Astrocyte of the cerebellum (primary cell): ENCODE measurements at regions of chr2 and their contacts with region 1.

Region 1: DNA sequence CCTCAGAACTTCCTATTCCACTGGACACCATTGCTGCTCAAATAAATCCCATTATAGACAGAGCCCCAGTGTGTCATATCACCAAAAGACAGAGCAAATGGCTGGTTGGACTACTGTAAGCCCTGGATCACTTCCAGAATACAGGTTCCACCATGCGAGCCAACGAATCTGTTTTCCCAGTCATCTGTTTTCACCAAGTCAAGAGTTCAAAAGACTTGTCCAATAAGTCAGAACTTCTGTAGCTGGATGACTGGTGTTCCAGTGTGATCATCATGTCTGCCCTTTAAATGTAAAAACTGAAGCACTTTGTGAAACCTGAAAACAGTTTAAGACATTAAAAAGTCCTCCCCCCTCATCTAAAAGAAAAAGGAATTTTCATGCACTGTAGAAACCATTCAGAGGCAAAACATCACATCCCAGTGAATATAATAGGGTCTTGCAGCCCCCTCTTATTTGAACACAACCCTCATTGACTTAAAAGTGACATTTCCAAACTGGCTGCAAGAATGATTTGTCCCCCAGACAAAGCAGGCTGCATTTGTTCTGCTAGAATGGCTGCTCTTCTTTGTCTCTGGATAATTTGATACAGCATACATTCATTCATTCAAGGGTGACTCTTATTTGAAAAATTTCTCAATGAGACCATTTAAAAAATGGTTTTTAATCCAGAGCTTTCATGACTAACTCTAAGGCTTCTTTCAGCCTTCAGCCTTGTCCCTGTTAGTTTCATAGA is 64.6 kb upstream of the TANC1 start:
- DNase-seq: no peak
- H3K4me3 ChIP-seq: no peak overlapping the region
- CTCF ChIP-seq: no peak

Region 2: GRCh38 chr2:158979772-158980171 is 75.9 kb after region 1 on chr2:
- in situ Hi-C with region 1: no loop called
- DNase-seq: no peak
- H3K4me3 ChIP-seq: no peak overlapping the region
- CTCF ChIP-seq: no peak

Region 3: DNA sequence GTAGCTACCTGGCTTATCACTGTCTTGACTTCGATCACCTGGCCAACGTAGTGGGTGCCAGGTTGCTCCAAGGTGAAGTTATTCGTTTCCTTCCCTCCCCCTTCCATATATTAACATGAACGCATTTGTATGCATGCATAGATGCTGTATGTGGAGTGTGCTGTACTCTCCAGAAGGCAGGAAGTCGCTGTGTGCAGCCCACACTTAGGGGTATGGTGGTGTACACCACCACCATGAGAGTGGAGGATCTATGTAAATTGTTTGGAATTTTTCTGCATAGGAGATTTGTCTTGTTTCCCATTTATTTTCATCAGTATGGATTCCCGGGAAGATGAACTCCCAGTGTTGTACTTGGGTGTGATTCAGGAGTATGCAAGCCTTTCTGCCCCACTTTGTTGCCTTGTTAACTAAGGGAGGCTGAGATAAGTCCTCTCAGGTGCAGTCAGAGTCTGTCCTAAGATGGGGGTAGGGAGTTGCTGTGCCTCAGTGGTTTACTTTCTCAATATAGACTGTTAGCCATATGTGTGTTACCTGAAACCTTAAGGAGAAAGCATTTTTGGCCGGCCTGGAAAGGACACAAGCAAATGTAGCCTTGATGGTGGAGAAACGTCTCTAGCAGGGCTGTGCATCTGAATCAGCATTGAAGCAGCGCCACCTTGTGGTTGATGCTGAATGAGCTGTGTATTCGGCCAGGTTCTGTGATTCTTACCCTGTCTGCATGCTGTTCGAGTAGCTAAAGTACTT is 214.4 kb after region 1 on chr2:
- in situ Hi-C with region 1: loop called (anchors 5 kb)
- DNase-seq: peak; percentile 84
- H3K4me3 ChIP-seq: no peak overlapping the region
- CTCF ChIP-seq: peak; percentile 92